Caco-2 (cell line): ENCODE measurements at regions of chr5 and their contacts with region 1.

Region 1: DNA sequence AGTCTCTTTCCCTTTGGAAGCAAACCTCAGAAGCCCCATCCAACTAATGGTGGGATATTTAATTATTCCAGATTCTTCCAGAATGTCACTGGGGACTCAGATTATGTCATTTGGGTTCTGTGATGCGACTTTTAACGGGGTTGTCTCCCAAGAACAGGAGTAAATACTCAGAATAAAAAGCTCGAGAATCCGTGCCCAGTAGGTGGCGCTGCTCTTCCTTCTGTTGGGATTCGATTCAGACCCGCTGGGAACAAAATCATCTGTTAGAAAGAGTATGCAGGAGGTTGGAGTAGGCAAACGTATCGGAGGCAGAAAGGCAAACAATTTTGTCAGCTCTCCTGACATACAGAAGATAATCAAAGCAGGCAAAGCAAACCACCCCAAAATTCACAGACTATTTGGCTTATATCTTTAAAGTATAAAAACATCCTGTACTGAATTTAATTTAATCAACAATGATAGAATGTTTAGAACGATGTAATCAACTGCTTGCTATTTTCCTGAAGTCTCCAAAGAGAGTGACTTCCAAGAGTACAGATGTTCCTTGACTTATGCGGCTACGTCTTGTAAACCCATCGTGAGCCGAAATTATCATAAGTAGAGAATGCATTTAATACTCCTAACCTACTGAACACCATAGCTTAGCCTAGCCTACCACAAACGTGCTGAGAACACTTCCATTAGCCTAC is 169.8 kb upstream of the RAI14 start:
- DNase-seq: peak; percentile 84 to 85
- H3K4me3 ChIP-seq: no peak overlapping the region
- H3K4me3 Mint-ChIP-seq: peak overlapping the region; percentile 41
- H3K27ac Mint-ChIP-seq: peak overlapping the region; percentile 68
- H3K4me1 ChIP-seq: peaks cover 47% of the 10 kb centered on the region
- H3K4me1 Mint-ChIP-seq: peaks cover 51% of the 10 kb centered on the region
- H3K27me3 ChIP-seq: no peaks in the 10 kb centered on the region
- H3K27me3 Mint-ChIP-seq: no peaks in the 10 kb centered on the region
- CTCF ChIP-seq: peak; percentile 85 to 86

Region 2: DNA sequence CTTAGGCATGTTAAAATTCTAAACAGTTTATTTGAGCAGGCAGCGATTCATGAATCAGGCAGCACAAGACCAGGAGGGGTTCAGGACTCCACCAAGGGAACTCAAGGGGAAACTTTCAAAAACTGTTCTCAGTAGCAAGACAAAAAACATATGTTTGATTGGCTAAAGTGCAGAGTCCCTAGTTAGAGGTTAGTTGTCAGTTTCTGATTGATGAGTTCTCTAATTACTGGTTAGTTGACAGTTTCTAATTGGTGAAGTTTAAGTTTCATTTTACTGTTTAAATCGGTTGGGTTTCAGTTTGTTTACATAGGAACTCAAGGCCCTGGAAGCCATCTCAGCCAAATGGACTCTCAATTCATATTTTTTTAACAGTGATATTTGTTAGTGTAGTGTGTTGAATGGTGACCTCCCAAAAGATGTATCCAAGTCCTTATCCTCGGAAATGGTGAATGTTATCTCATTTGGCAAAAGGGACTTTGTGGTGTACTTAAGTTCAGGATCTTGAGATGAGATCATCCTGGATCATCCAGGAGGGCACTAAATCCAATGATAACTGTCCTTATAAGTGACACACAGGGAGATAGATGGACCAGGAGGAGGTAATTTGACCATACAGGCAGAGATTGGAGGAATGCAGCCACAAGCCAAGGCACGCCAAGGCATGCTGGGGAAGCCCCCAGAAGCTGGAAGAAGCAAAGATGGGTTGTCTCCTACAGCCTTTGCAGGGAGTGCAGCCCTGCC is 49.4 kb before region 1 on chr5:
- CTCF ChIA-PET with region 1: no interaction called
- POLR2A ChIA-PET with region 1: no interaction called
- intact Hi-C with region 1: no loop called
- DNase-seq: no peak
- H3K4me3 ChIP-seq: no peak overlapping the region
- H3K4me3 Mint-ChIP-seq: no peak overlapping the region
- H3K27ac Mint-ChIP-seq: no peak overlapping the region
- H3K4me1 ChIP-seq: peaks cover 22% of the 10 kb centered on the region
- H3K4me1 Mint-ChIP-seq: peaks cover 7% of the 10 kb centered on the region
- H3K27me3 ChIP-seq: no peaks in the 10 kb centered on the region
- H3K27me3 Mint-ChIP-seq: no peaks in the 10 kb centered on the region
- CTCF ChIP-seq: no peak

Region 3: DNA sequence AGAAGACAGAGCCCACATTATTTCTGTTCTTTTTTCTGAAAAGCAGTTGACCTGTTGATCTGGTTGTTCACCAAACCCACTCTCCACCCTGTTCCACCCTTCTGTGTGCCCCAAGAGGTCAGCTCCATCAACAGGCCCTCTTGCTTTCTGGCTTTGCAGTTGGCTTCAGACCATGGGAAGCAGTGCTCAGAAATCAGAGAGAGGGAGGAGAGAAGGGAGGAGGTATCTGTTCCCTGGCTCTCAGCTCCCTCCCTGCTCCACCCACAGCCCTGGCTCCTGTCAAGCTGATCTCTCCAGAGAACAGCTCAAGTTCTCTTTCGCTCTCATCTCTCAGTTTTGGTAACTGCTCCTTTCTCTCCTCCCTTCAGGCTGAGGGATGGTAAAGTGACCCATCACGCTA is 25.6 kb after region 1 on chr5:
- CTCF ChIA-PET with region 1: interaction called, 4 read pairs
- POLR2A ChIA-PET with region 1: interaction called, 5 read pairs
- intact Hi-C with region 1: loop called (anchors 1 kb)
- DNase-seq: no peak
- H3K4me3 ChIP-seq: no peak overlapping the region
- H3K4me3 Mint-ChIP-seq: no peak overlapping the region
- H3K27ac Mint-ChIP-seq: peak overlapping the region; percentile 0
- H3K4me1 ChIP-seq: peaks cover 30% of the 10 kb centered on the region
- H3K4me1 Mint-ChIP-seq: peaks cover 38% of the 10 kb centered on the region
- H3K27me3 ChIP-seq: no peaks in the 10 kb centered on the region
- H3K27me3 Mint-ChIP-seq: no peaks in the 10 kb centered on the region
- CTCF ChIP-seq: no peak

Region 4: DNA sequence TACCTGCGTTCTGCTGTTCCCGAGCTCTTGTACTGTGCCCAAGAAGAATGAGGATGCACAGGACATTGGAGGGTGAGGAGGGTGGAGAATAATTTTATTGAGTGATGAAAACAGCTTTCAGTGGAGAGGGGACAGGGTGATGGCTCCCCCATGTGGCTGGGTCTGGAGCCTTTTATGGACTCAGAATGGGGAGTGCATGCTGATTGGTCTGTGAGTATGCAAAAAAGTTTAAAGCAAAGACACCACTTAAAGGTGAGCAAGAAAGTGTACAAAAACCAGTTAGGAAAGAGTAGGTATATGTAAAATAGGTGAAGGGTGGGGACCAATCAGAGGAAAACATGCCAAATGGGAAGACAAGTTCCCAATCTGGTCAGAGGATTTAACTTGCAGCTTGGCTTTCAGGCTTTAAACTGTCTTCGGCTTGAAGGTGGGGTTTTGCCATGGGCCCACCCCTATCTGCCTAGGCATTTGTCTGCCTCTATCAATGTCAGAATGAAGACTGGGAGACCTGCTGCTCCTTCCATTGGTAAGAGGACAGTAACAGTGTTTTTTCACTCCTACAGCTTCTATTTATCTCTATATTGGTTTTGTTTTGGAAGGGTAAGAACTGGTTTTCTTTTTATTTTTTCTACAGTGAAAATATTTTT is 51.8 kb after region 1 on chr5:
- CTCF ChIA-PET with region 1: no interaction called
- POLR2A ChIA-PET with region 1: no interaction called
- intact Hi-C with region 1: loop called (anchors 1 kb)
- DNase-seq: peak in 1 of 2 experiments; percentile 36
- H3K4me3 ChIP-seq: no peak overlapping the region
- H3K4me3 Mint-ChIP-seq: no peak overlapping the region
- H3K27ac Mint-ChIP-seq: no peak overlapping the region
- H3K4me1 ChIP-seq: 0 out of 2 replicates have a peak, but pooled peaks cover 4% of the 10 kb centered on the region
- H3K4me1 Mint-ChIP-seq: no peaks in the 10 kb centered on the region
- H3K27me3 ChIP-seq: no peaks in the 10 kb centered on the region
- H3K27me3 Mint-ChIP-seq: no peaks in the 10 kb centered on the region
- CTCF ChIP-seq: no peak

Region 5: DNA sequence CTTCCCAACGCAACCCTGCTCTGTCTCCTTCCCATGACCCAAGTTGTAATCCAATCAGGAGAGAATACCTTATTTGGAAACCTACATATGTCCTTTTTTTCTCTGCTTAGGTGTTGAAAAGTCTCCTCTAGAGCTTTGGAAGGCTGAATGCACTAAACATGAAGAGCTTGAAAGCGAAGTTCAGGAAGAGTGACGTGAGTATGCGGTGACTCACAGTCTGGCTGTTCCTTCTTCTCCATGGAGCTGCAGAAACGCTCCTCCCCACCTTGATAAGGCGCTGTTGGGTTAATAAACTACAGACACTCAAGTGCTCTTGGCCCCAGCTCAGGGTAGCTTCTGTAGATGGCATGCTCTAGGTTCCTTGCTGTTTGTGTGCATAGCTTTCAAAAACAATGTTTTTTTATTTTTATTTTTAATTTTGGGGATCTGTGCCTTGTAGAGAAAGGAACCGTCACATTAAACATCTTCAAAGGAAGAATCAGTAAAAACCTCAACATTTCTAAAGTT is 200.5 kb after region 1 on chr5:
- CTCF ChIA-PET with region 1: interaction called, 7 read pairs
- POLR2A ChIA-PET with region 1: no interaction called
- intact Hi-C with region 1: loop called (anchors 5 kb)
- DNase-seq: peak; percentile 85 to 90
- H3K4me3 ChIP-seq: no peak overlapping the region
- H3K4me3 Mint-ChIP-seq: peak overlapping the region; percentile 67
- H3K27ac Mint-ChIP-seq: peak overlapping the region; percentile 88
- H3K4me1 ChIP-seq: peaks cover 53% of the 10 kb centered on the region
- H3K4me1 Mint-ChIP-seq: peaks cover 43% of the 10 kb centered on the region
- H3K27me3 ChIP-seq: no peaks in the 10 kb centered on the region
- H3K27me3 Mint-ChIP-seq: no peaks in the 10 kb centered on the region
- CTCF ChIP-seq: no peak

Region 6: GRCh38 chr5:34756781-34757624 is 270.7 kb after region 1 on chr5:
- CTCF ChIA-PET with region 1: no interaction called
- POLR2A ChIA-PET with region 1: no interaction called
- intact Hi-C with region 1: loop called (anchors 2 kb)
- DNase-seq: peak; percentile 66 to 77
- H3K4me3 ChIP-seq: no peak overlapping the region
- H3K4me3 Mint-ChIP-seq: peak overlapping the region; percentile 40
- H3K27ac Mint-ChIP-seq: peak overlapping the region; percentile 50
- H3K4me1 ChIP-seq: peaks cover 22% of the 10 kb centered on the region
- H3K4me1 Mint-ChIP-seq: peaks cover 38% of the 10 kb centered on the region
- H3K27me3 ChIP-seq: no peaks in the 10 kb centered on the region
- H3K27me3 Mint-ChIP-seq: no peaks in the 10 kb centered on the region
- CTCF ChIP-seq: no peak

Region 7: DNA sequence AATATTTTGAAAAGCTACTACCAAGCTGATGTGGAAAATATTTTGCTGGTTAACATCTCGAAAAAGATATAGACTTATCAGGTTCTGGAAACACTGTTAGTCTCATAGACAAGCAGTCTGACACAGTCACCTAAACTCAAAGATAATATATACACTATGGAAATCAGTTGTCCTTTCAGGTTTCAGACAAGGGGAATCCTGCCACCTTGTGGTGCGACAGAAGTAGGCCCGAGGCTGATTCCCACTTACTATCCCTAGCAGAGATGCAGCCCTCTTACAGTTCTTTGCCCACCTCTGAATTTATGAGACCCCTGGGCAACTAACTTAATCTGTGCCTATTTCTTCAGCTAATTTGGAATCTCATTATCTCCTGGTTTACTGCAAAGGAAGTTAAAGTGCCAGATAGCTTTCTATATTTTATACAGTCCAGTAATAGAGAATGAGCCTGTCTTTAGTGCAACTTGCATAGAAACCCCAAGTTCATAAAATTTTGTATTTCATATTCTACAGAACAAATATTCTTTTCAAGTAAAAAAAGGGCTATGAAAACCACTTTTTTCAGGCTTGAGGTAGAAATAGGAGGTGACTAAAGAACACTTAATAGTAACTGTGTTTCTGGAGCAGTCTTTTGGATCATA is 412.1 kb after region 1 on chr5:
- CTCF ChIA-PET with region 1: interaction called, 10 read pairs
- POLR2A ChIA-PET with region 1: interaction called, 3 read pairs
- intact Hi-C with region 1: loop called (anchors 1 kb)
- DNase-seq: peak; percentile 68 to 75
- H3K4me3 ChIP-seq: no peak overlapping the region
- H3K4me3 Mint-ChIP-seq: no peak overlapping the region
- H3K27ac Mint-ChIP-seq: peak overlapping the region; percentile 45
- H3K4me1 ChIP-seq: peaks cover 15% of the 10 kb centered on the region; the same call in 1 of the 2 replicates
- H3K4me1 Mint-ChIP-seq: no peaks in the 10 kb centered on the region
- H3K27me3 ChIP-seq: no peaks in the 10 kb centered on the region
- H3K27me3 Mint-ChIP-seq: no peaks in the 10 kb centered on the region
- CTCF ChIP-seq: peak; percentile 85 to 93

Region 8: DNA sequence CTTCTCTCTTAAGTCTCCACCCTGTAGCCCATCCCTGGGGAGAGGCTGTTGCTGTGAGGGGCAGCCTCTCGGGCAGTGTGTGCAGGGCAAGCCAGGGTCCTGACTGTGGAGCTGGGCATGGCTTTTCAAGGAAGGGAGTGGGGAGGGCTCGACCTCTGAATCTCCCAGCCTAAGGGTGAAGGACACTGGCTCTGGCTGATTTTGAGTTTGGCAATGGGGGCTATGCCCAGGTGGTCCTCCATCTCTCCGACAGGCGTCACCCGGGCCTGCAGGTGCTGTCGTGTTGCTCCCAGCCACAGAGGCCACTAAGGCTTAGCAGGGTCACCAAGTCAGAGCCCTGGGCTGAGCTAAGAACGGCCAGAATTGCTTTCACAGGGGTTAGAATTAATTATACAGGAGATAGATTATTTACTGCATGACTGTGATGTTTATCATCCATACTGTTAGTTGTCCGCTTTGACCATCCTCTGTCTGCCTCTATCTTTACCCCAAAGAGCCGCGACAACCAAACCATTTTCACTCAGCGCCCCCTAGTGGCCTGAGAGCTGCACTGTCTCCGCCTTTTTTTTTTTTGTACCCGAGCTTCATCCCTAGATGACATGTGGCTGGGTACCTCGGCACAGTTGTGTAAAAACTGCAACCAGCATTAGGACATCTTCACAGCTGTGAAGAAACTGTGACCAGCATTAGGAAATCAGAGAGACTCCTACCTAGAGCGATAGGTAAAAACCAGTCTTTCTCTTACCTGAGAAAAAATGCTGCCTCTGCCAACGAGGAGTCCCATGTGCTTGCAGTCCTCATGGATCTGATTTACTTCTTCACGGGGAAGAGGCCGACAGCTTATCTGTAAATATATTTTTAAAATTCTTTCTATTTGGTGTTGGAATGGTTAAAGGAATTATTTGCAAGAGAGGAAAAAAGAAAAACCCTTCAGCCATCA is 517.0 kb after region 1 on chr5:
- CTCF ChIA-PET with region 1: no interaction called
- POLR2A ChIA-PET with region 1: no interaction called
- intact Hi-C with region 1: loop called (anchors 2 kb)
- DNase-seq: peak; percentile 43 to 78
- H3K4me3 ChIP-seq: no peak overlapping the region
- H3K4me3 Mint-ChIP-seq: no peak overlapping the region
- H3K27ac Mint-ChIP-seq: no peak overlapping the region
- H3K4me1 ChIP-seq: no peaks in the 10 kb centered on the region
- H3K4me1 Mint-ChIP-seq: no peaks in the 10 kb centered on the region
- H3K27me3 ChIP-seq: no peaks in the 10 kb centered on the region
- H3K27me3 Mint-ChIP-seq: peaks cover 2% of the 10 kb centered on the region
- CTCF ChIP-seq: peak; percentile 90 to 95